ENCODE measurements at regions of chr11 and their contacts with region 1.

Region 1: GRCh38 chr11:72793425-72794367 is at the start of gene STARD10:
- DNase-seq: no peak
- H3K4me3 ChIP-seq: peak within 1 kb of the TSS; percentile 71
- CTCF ChIP-seq: peak; percentile 92

Region 2: GRCh38 chr11:72736452-72737069 is 57.1 kb before region 1 on chr11:
- CTCF ChIA-PET with region 1: interaction called, 207 read pairs
- POLR2A ChIA-PET with region 1: interaction called, 3 read pairs
- DNase-seq: no peak
- H3K4me3 ChIP-seq: no peak overlapping the region
- CTCF ChIP-seq: no peak

Region 3: DNA sequence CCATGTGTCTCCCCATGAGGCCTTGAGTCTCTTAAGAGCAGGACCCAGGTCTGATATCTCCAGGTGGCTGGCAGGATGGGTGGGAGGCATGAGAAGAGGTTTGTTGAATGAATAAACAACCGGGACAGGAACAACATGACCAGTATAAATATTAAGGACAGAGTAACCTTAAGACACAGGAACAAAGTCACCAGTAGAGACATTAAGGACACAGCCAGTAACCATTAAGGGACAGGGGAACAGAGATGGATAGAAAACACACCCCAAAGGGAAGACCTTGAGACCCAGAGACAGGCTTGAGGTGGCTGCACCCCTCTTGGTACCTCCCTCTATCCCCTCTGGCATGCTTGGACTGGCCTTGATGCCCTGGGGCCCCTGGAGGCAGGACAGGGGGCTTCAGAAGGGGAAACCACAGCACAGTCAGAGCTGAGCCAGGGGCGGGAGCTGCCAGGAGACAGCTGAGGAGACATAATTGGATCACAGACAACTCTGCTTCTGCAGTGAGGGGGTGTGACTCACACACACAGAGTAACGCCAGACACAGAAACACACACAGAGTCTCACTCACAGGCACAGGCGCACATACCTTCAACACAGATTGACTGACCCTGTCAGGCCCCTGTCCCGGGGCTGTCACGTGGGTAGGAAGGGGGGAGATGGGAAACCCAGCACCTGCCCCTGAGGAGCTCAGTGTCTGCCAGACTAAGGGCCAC is 20.6 kb before region 1 on chr11:
- CTCF ChIA-PET with region 1: interaction called, 27 read pairs
- POLR2A ChIA-PET with region 1: no interaction called
- DNase-seq: peak; percentile 69
- H3K4me3 ChIP-seq: no peak overlapping the region
- CTCF ChIP-seq: no peak

Region 4: GRCh38 chr11:72781313-72782050 is 12.2 kb before region 1 on chr11:
- CTCF ChIA-PET with region 1: interaction called, 23 read pairs
- POLR2A ChIA-PET with region 1: no interaction called
- DNase-seq: no peak
- H3K4me3 ChIP-seq: peak overlapping the region; percentile 53
- CTCF ChIP-seq: no peak

Region 5: DNA sequence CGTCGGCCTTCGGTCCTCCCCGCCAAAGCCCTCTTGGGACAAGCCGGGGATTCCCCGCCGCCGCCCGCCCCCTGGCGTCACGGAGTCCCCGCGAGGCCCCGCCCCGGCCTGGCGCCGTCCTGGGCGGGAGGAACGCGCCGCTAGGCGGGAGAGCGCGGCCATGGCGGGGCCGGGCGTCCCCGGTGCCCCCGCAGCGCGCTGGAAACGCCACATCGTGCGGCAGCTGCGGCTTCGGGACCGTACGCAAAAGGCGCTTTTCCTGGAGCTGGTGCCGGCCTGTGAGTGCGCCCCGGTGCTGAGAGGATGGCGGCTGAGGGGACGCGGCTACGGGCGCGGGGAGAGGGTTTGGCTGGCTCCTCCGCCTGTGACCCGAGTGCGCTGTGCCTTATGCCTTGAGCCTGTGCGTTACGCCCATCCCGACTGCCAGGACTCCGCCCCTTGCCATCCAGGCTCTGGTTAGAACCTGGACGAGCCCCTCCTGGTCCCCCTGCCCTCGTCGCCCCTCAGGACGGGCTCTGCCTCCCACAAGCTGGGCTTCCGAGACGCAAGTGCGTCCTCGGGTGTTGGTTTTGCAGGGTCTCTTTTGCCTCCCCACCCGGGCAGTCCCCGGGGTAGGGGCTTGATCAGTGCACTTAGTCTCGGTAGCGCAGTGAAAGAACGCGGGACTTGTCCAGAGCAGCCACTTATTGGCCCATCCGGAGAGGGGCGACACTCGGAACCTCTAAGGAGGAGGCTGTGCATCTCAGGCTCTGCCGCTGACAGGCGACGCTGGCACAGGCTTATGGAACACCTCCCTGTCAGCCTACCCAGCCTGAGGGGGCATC is 20.8 kb after region 1 on chr11 and contains the start of gene ATG16L2:
- CTCF ChIA-PET with region 1: interaction called, 50 read pairs
- POLR2A ChIA-PET with region 1: interaction called, 3 read pairs
- DNase-seq: no peak
- H3K4me3 ChIP-seq: peak within 1 kb of the TSS; percentile 91
- CTCF ChIP-seq: peak; percentile 21